ENCODE measurements at regions of chr2 and their contacts with region 1.

Region 1: GRCh38 chr2:36878429-36878828 is 87.9 kb downstream of the STRN start:
- DNase-seq: no peak
- ATAC-seq: no peak
- H3K4me3 ChIP-seq: no peak overlapping the region
- H3K27ac ChIP-seq: no peak overlapping the region
- H3K4me1 ChIP-seq: peaks cover 7% of the 10 kb centered on the region
- H3K27me3 ChIP-seq: no peaks in the 10 kb centered on the region
- CTCF ChIP-seq: no peak
- EP300 ChIP-seq: no peak
- POLR2A ChIP-seq: no peak
- RAD21 ChIP-seq: no peak

Region 2: DNA sequence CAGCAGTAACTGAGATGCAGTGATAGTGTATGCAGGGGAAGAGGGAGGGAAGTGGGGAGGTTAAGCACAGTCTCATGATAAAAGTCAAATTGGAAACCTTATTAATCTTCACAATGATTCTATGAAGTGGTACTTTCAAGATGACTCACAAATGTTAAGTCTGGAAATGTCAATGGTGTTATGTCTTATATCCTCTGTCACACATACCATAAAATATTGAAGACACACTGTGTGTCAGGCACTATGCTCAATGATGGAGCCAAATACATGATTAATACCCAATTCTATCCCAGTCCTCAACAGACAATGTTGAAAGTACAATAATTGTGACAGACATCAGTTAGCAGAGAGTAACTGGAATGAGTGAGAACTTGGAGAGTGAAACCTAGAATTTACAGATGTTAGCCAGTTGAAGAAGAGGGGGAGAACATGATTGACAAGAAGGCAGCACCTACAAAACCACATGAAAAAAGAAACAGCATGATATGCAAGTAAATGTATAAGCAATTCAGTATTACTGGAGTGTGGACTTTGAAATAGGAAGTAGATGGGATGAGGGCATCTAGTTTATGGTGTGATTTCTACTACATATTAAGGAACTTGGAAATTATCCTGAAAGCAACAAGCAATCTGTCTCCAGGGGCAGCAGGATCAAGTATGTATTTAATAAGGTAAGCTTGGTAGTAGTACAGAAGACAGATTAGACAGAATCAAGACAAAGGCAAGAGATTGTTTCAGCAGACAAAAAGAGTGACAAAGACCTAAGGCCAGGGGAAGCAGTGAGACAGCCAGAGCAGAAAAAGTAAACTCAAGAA is 19.7 kb before region 1 on chr2:
- CTCF ChIA-PET with region 1: no interaction called
- POLR2A ChIA-PET with region 1: no interaction called
- in situ Hi-C with region 1: no loop called
- intact Hi-C with region 1: no loop called
- DNase-seq: peak; percentile 81
- ATAC-seq: peak; percentile 96
- H3K4me3 ChIP-seq: peak overlapping the region; percentile 24 to 36 (median 35); a peak in 5 of 6 replicates
- H3K27ac ChIP-seq: peak overlapping the region; percentile 71
- H3K4me1 ChIP-seq: peaks cover 25% of the 10 kb centered on the region
- H3K27me3 ChIP-seq: no peaks in the 10 kb centered on the region
- CTCF ChIP-seq: no peak
- EP300 ChIP-seq: peak in 1 of 2 experiments; percentile 56; a peak in 2 of 4 replicates
- POLR2A ChIP-seq: peak in 1 of 2 experiments; percentile 49; a peak in 2 of 4 replicates
- RAD21 ChIP-seq: no peak

Region 3: DNA sequence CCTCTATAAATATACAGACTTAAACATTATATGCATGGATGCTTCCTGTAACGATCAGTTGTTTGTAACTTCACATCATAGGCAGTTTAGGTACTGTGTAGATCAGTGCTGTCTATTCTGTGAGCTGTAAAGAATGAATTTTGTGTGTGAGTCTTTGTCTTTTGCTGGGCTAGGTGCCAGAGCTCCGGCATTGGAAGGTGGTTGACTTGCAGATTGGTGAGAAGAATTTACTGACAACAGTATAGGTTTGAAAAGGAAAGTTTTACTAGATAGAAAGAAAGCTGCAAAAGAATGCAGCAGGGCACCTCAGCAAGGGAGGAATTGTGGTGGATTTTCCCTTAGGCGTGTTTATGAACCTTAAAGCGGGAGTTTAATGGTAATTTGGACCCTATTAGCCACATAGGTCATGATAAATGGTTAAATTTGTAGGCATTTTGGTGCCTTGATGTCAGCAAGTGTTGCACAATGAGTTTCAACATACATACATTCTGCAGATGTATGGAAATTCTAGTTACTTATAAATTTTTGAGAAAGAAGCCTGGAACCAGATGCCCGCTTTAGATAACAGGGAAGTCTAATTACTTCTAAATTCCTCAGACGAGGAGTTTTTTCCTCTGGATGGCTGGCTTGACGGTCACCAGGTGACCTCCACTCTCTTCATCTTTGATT is 459.3 kb after region 1 on chr2:
- CTCF ChIA-PET with region 1: no interaction called
- POLR2A ChIA-PET with region 1: no interaction called
- in situ Hi-C with region 1: no loop called
- intact Hi-C with region 1: loop called (anchors 5 kb)
- DNase-seq: no peak
- ATAC-seq: no peak
- H3K4me3 ChIP-seq: no peak overlapping the region
- H3K27ac ChIP-seq: no peak overlapping the region
- H3K4me1 ChIP-seq: no peaks in the 10 kb centered on the region
- H3K27me3 ChIP-seq: peaks cover 0 to 26% of the 10 kb centered on the region in 2 experiments; a peak in 2 of 5 replicates
- CTCF ChIP-seq: no peak
- EP300 ChIP-seq: no peak
- POLR2A ChIP-seq: no peak
- RAD21 ChIP-seq: no peak